B cell (primary cell): ENCODE measurements at regions of chr19 and their contacts with region 1.

Region 1: DNA sequence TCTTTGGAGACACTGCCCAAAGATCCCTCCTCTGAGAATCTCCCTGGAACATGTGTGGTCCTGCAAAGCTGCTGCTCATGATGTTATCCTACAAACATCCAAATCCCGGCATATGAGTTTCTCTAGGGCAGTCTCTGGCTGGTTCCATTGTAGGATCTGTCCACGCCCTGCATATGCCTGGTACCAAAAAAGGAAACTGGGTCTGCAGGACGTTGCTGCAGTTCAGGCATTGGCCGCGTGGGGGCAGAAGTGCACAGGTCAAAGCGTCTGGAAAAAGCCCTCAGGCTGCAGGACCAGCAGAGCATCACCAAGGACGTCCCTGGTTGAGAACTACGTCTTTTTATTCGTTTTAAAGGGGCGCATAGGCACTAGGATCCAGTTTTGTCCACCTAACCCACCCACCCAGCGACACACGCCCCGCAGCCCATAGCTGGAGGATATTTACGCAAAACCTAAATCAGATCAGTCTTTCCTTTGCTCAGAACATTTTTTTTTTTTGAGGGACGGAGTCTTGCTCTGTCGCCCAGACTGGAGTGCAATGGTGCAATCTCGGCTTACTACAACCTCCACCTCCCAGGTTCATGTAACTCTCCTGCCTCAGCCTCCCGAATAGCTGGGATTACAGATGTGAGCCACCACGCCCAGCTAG is 12.9 kb upstream of the ZNF564 start:
- DNase-seq: peak; percentile 91
- ATAC-seq: peak; percentile 100
- H3K4me3 ChIP-seq: no peak overlapping the region
- H3K4me3 Mint-ChIP-seq: peak overlapping the region; percentile 27
- H3K27ac ChIP-seq: no peak overlapping the region
- H3K27ac Mint-ChIP-seq: peak overlapping the region; percentile 46
- H3K4me1 ChIP-seq: peaks cover 0 to 7% of the 10 kb centered on the region in 2 donors
- H3K4me1 Mint-ChIP-seq: peaks cover 6% of the 10 kb centered on the region
- H3K27me3 ChIP-seq: no peaks in the 10 kb centered on the region
- H3K27me3 Mint-ChIP-seq: no peaks in the 10 kb centered on the region
- CTCF ChIP-seq: peak; percentile 96

Region 2: GRCh38 chr19:12202250-12202649 is 361.9 kb before region 1 on chr19:
- CTCF ChIA-PET with region 1: no interaction called
- POLR2A ChIA-PET with region 1: no interaction called
- intact Hi-C with region 1: loop called (anchors 5 kb)
- DNase-seq: peak; percentile 53
- ATAC-seq: peak; percentile 33
- H3K4me3 ChIP-seq: no peak overlapping the region
- H3K4me3 Mint-ChIP-seq: no peak overlapping the region
- H3K27ac ChIP-seq: no peak overlapping the region
- H3K27ac Mint-ChIP-seq: no peak overlapping the region
- H3K4me1 ChIP-seq: peaks cover 0 to 3% of the 10 kb centered on the region in 2 donors
- H3K4me1 Mint-ChIP-seq: peaks cover 9% of the 10 kb centered on the region
- H3K27me3 ChIP-seq: no peaks in the 10 kb centered on the region
- H3K27me3 Mint-ChIP-seq: no peaks in the 10 kb centered on the region
- CTCF ChIP-seq: peak; percentile 30

Region 3: DNA sequence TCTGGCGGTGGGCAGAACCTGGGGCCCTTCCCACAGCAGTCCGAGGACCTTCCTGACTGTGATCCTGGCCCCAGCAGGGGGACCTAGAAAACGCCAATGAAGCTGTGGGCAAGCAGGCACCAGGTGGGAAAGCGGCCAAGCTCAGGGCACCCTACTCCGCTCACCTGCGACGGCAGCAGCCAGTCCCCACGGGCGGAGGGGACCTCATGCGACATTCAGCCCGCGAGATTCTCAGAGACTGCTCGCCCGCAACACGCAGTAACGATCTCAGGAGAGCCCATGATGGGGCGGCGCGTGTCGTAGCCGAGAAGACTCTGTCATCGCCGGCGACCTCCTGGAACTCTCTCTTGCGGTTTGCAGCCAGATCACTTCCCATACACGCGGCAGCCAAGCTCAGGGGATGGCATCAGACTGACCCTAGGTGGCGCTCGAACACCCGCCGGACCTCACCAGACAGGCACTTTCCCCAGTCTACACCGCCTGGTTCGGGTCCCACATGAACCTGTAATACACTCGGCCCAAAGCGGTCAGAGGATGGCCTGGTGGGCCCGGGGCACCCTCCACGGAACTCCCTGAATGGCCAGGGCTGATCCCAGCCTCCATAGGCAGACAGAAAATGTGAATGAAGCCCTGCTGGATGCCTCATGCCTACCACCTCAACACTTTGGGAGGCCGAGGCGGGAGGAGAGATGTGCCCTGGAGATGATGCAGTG is 75.9 kb after region 1 on chr19:
- CTCF ChIA-PET with region 1: interaction called, 17 read pairs
- POLR2A ChIA-PET with region 1: no interaction called
- intact Hi-C with region 1: no loop called
- DNase-seq: peak; percentile 91
- ATAC-seq: peak; percentile 95
- H3K4me3 ChIP-seq: peak overlapping the region in 4 of 5 experiments; percentile 18 to 48 (median 36)
- H3K4me3 Mint-ChIP-seq: peak overlapping the region; percentile 82
- H3K27ac ChIP-seq: peak overlapping the region; percentile 22 to 60
- H3K27ac Mint-ChIP-seq: peak overlapping the region; percentile 78
- H3K4me1 ChIP-seq: peaks cover 8 to 12% of the 10 kb centered on the region in 2 donors
- H3K4me1 Mint-ChIP-seq: peaks cover 18% of the 10 kb centered on the region
- H3K27me3 ChIP-seq: no peaks in the 10 kb centered on the region
- H3K27me3 Mint-ChIP-seq: no peaks in the 10 kb centered on the region
- CTCF ChIP-seq: peak; percentile 89

Region 4: GRCh38 chr19:12666265-12667048 is 102.3 kb after region 1 on chr19 and contains the starts of genes MAN2B1 and WDR83:
- CTCF ChIA-PET with region 1: interaction called, 82 read pairs
- POLR2A ChIA-PET with region 1: interaction called, 3 read pairs
- intact Hi-C with region 1: no loop called
- DNase-seq: peak; percentile 91
- ATAC-seq: peak; percentile 71
- H3K4me3 ChIP-seq: peak within 1 kb of the TSS; percentile 84 to 99 (median 94)
- H3K4me3 Mint-ChIP-seq: peak within 1 kb of the TSS; percentile 98
- H3K27ac ChIP-seq: peak within 1 kb of the TSS; percentile 95 to 99
- H3K27ac Mint-ChIP-seq: peak within 1 kb of the TSS; percentile 97
- H3K4me1 ChIP-seq: peaks cover 37 to 60% of the 10 kb centered on the region in 2 donors
- H3K4me1 Mint-ChIP-seq: peaks cover 67% of the 10 kb centered on the region
- H3K27me3 ChIP-seq: no peaks in the 10 kb centered on the region
- H3K27me3 Mint-ChIP-seq: no peaks in the 10 kb centered on the region
- CTCF ChIP-seq: no peak
- total RNA-seq, gene MAN2B1: 252 and 256 TPM in 2 replicates
- total RNA-seq, gene WDR83: 24.6 and 25.8 TPM in 2 replicates

Region 5: DNA sequence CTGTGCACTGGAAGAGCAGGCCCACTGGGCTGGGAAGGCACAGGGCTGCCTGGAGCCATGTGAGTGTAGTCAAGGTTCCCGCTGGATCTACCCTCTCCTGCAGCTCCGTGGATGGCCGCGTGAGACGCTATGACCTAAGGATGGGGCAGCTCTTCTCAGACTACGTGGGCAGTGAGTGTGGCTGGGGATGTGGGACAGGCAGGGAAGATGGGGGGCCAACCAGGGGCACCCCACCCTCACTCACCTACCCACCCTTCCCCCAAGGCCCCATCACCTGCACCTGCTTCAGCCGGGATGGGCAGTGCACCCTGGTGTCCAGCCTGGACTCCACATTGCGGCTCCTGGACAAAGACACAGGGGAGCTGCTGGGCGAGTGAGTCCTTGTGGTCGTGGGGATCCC is 108.6 kb after region 1 on chr19:
- CTCF ChIA-PET with region 1: interaction called, 82 read pairs
- POLR2A ChIA-PET with region 1: no interaction called
- intact Hi-C with region 1: loop called (anchors 1 kb)
- DNase-seq: no peak
- ATAC-seq: no peak
- H3K4me3 ChIP-seq: no peak overlapping the region
- H3K4me3 Mint-ChIP-seq: no peak overlapping the region
- H3K27ac ChIP-seq: no peak overlapping the region
- H3K27ac Mint-ChIP-seq: no peak overlapping the region
- H3K4me1 ChIP-seq: peaks cover 20 to 32% of the 10 kb centered on the region in 2 donors
- H3K4me1 Mint-ChIP-seq: peaks cover 40% of the 10 kb centered on the region
- H3K27me3 ChIP-seq: no peaks in the 10 kb centered on the region
- H3K27me3 Mint-ChIP-seq: no peaks in the 10 kb centered on the region
- CTCF ChIP-seq: no peak

Region 6: DNA sequence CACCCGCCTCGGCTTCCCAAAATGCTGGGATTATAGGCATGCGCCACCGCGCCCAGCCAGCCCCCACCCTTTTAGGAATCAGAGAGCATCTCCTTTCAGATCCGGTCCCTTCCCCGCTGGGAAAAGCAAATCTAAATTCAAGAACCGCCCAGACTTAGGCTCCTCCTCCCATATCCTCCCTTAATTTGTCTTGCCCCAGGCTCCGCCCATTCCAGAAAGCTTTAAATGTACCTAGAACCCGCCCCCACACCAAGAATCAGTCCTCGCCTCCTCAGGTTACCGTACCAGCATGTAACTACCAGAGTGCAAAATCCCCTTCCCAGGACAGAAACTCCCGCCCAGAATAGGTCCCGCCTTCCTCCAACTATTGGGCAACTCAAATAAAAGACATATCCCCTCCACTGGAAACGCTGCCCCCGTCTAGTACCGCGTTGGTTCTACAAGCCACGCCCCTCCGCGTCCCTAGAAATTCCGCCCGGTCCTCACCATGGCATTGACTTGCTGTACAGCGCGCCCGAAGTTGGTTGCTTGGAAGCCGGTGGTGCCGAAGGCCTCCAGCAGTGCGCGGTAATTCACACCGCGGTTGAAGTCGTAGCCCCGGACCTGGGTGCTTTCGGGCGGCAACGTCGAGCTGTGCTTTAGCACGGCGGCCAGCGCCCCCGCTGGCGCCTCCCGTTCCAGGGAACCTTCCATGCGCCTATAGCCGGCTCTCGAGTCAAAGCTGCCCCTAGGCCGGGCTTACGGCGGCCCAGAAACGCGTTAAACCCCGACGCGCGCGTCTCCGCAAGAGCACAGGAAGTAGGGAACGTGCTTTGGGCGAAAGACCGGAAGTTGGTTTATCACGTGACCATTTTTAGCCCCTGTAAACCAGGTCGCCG is 117.2 kb after region 1 on chr19 and contains the start of gene DHPS:
- CTCF ChIA-PET with region 1: interaction called, 26 read pairs
- POLR2A ChIA-PET with region 1: no interaction called
- intact Hi-C with region 1: loop called (anchors 1 kb)
- DNase-seq: peak; percentile 98
- ATAC-seq: peak; percentile 75
- H3K4me3 ChIP-seq: peak within 1 kb of the TSS; percentile 73 to 90 (median 86)
- H3K4me3 Mint-ChIP-seq: peak within 1 kb of the TSS; percentile 93
- H3K27ac ChIP-seq: peak within 1 kb of the TSS; percentile 89 to 95
- H3K27ac Mint-ChIP-seq: peak within 1 kb of the TSS; percentile 94
- H3K4me1 ChIP-seq: peaks cover 9 to 17% of the 10 kb centered on the region in 2 donors
- H3K4me1 Mint-ChIP-seq: peaks cover 24% of the 10 kb centered on the region
- H3K27me3 ChIP-seq: no peaks in the 10 kb centered on the region
- H3K27me3 Mint-ChIP-seq: no peaks in the 10 kb centered on the region
- CTCF ChIP-seq: no peak
- total RNA-seq, gene DHPS: 187 and 200 TPM in 2 replicates